ENCODE measurements at regions of chr7 and their contacts with region 1.

Region 1: DNA sequence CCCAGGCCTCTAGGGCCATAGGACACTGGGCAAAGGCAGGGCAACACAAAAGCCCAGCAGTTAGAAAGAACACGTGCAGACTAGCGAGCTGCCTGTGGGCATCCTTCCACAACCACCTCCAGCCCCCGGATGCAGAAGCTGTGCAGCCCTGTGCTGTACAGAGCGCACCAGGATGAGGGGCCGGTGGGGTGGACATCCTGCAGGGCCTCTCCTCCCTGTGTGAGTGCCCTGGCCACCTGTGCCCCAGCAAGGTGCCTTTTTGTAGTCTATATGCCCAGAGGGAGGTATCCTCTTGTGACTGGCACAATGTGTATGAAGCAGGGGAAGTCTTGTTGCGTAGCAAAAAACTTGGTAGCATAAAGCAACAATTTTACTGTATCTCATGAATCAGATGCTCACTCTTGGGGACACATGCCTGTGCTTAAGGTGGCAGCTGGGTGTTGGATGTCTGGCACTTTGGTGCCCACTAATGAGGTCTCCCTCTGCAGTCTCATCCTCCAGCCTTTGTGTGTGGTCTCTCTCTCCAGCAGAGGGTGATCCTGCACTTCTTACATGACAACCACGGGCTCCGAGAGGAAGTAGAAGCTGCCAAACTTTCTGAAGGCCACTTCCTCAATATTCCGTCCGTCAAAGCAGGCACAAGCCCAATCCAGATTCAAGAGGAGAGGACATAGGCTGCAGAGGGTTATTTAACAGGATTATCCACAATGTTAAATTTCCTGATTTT is 8.7 kb downstream of the NCAPG2 start:
- DNase-seq: peak; percentile 73
- ATAC-seq: peak; percentile 98

Region 2: DNA sequence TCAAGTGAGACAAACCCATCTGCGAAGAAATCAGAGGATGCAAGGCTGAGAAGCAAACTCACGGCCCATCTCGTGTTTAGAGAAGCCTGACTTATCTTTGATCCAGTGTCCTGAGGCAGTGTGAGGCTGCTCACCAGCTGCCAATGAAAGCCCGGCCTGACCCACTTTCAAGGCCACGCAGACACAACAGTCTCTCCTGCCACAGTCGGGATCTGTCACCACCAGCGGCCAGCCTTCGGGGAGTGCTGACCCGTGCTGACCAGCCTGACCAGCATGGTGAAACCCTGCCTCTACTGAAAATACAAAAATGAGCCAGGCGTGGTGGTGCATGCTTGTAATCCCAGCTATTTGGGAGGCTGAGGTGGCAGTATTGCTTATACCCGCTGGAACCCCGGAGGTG is 1366.4 kb before region 1 on chr7:
- intact Hi-C with region 1: no loop called
- DNase-seq: no peak
- ATAC-seq: no peak

Region 3: GRCh38 chr7:157979637-157980340 is 716.1 kb before region 1 on chr7:
- intact Hi-C with region 1: loop called (anchors 5 kb)
- DNase-seq: peak; percentile 39
- ATAC-seq: no peak